MCF 10A (cell line): ENCODE measurements at regions of chr1 and their contacts with region 1.

Region 1: GRCh38 chr1:212455803-212456528 is 23.2 kb downstream of the NENF start:
- DNase-seq: peak; percentile 88
- H3K4me3 Mint-ChIP-seq: no peak overlapping the region
- H3K27ac Mint-ChIP-seq: no peak overlapping the region
- H3K4me1 Mint-ChIP-seq: no peaks in the 10 kb centered on the region
- H3K27me3 Mint-ChIP-seq: no peaks in the 10 kb centered on the region
- CTCF ChIP-seq: peak; percentile 100

Region 2: GRCh38 chr1:211698161-211699026 is 757.6 kb before region 1 on chr1:
- CTCF ChIA-PET with region 1: interaction called, 22 read pairs
- POLR2A ChIA-PET with region 1: no interaction called
- intact Hi-C with region 1: loop called (anchors 5 kb)
- DNase-seq: peak; percentile 93
- H3K4me3 Mint-ChIP-seq: no peak overlapping the region
- H3K27ac Mint-ChIP-seq: no peak overlapping the region
- H3K4me1 Mint-ChIP-seq: no peaks in the 10 kb centered on the region
- H3K27me3 Mint-ChIP-seq: no peaks in the 10 kb centered on the region
- CTCF ChIP-seq: peak; percentile 100

Region 3: DNA sequence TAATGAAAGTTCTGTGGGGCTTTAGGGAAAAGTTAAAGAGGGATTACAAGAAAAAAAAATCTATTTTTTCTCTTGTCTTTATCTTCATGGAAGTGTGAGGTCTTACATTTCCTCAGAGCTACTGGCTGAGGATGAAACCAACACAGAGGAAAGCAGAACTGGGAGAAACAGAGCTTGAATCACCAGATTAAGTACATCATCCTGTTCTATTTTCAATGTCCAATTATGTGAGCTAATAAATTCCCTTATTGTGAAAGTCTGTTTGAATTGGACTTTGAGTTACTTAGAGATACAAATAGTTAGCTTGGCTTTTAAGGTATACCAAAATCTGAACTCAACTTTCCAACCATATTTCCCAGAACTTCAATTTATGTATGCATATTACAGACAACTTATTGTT is 694.6 kb before region 1 on chr1:
- CTCF ChIA-PET with region 1: no interaction called
- POLR2A ChIA-PET with region 1: no interaction called
- intact Hi-C with region 1: no loop called
- DNase-seq: no peak
- H3K4me3 Mint-ChIP-seq: no peak overlapping the region
- H3K27ac Mint-ChIP-seq: no peak overlapping the region
- H3K4me1 Mint-ChIP-seq: no peaks in the 10 kb centered on the region
- H3K27me3 Mint-ChIP-seq: no peaks in the 10 kb centered on the region
- CTCF ChIP-seq: no peak

Region 4: DNA sequence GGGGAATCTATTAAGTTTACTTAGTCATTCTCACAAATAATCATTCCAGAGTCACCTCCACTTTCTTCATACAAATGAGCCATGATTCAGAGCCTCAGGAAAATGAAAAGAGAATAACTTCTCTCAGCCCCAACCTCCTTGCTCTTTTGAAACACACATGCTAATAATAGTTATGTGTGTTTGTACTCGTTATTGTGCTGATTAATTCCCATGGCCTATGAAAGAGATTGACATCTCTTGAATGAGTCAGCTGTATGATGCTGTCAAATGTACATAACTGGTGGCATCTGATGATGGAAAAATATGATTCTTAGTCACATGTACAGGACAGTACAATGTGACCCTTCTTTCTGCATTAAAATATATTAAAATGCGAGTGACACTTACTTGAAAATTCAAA is 378.9 kb before region 1 on chr1:
- CTCF ChIA-PET with region 1: interaction called, 481 read pairs
- POLR2A ChIA-PET with region 1: no interaction called
- intact Hi-C with region 1: no loop called
- DNase-seq: peak; percentile 51
- H3K4me3 Mint-ChIP-seq: no peak overlapping the region
- H3K27ac Mint-ChIP-seq: peak overlapping the region; percentile 41
- H3K4me1 Mint-ChIP-seq: peaks cover 13% of the 10 kb centered on the region
- H3K27me3 Mint-ChIP-seq: no peaks in the 10 kb centered on the region
- CTCF ChIP-seq: no peak

Region 5: DNA sequence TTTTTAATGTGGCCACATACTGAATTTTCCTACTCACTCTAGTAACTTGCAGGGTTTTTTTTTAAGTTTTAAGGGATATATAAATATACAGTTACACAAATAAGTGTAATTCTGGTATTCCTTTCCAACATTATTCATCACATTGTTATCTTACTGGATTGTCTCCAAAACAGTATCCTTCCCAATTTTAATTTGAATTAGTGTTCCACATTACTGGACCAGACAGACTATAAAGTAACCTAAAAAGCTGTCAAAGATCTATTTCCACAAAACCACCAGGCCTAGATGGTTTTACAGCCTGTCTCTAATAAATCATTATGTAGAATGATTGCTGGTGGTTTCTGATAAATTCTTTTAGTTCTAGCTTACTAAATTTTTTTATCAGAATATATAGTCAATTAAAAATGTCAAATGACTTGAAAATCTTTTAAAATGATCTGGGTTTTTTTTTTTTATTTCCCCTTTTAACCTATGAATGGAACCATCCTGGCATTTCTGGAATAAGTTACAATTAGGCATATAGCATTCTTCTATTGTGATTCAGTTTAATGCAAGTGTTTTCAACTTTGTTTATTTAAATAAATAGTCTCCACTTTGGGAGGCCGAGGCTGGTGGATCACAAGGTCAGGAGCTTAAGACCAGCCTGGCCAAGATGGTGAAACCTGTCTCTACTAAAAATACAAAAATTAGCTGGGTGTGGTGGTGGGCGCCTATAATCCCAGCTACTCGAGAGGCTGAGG is 100.6 kb before region 1 on chr1:
- CTCF ChIA-PET with region 1: interaction called, 222 read pairs
- POLR2A ChIA-PET with region 1: no interaction called
- intact Hi-C with region 1: no loop called
- DNase-seq: no peak
- H3K4me3 Mint-ChIP-seq: no peak overlapping the region
- H3K27ac Mint-ChIP-seq: no peak overlapping the region
- H3K4me1 Mint-ChIP-seq: peaks cover 6% of the 10 kb centered on the region
- H3K27me3 Mint-ChIP-seq: no peaks in the 10 kb centered on the region
- CTCF ChIP-seq: no peak

Region 6: DNA sequence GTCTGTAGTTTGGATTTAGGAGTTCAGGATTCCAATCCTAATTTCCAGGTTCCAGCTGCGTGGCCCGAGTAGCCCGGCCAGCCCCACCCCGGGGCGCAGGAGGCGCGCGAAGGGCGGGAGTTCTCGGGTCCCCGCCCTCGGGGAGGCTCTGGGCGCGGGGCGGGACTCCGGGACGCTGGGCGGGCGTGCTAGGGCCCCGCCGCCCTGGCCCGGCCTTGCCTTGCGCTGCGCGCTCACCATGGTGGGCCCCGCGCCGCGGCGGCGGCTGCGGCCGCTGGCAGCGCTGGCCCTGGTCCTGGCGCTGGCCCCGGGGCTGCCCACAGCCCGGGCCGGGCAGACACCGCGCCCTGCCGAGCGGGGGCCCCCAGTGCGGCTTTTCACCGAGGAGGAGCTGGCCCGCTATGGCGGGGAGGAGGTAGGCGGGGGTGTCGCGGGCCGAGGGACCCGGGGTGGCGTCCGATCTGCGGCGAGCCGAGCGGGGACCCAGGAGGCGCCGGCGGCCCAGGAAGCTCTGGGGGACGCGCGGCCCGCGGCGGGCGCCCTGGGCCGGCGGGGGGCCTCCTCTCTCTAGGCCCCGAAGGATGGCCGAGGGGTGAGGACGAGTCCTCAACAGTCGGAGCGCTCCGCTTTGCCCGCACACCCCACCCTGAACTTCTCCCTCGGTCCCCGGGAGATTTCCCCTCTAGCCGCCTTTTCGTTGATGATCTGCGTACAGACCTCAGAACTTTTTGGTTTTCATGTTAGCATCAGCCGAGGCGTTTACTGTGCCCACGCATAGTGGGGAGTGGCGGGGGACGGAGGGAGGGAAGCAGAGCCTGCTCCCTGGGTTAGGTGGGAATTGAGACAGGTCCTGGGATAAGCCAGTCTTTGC is 23.0 kb before region 1 on chr1 and contains the start of gene NENF:
- CTCF ChIA-PET with region 1: interaction called, 160 read pairs
- POLR2A ChIA-PET with region 1: interaction called, 3 read pairs
- intact Hi-C with region 1: no loop called
- DNase-seq: peak; percentile 96
- H3K4me3 Mint-ChIP-seq: peak within 1 kb of the TSS; percentile 78
- H3K27ac Mint-ChIP-seq: peak within 1 kb of the TSS; percentile 81
- H3K4me1 Mint-ChIP-seq: peaks cover 43% of the 10 kb centered on the region
- H3K27me3 Mint-ChIP-seq: no peaks in the 10 kb centered on the region
- CTCF ChIP-seq: no peak
- total RNA-seq, gene NENF: 110 and 122 TPM in 2 replicates

Region 7: GRCh38 chr1:212743901-212744475 is 288.0 kb after region 1 on chr1:
- CTCF ChIA-PET with region 1: interaction called, 30 read pairs
- POLR2A ChIA-PET with region 1: interaction called, 3 read pairs
- intact Hi-C with region 1: no loop called
- DNase-seq: no peak
- H3K4me3 Mint-ChIP-seq: no peak overlapping the region
- H3K27ac Mint-ChIP-seq: no peak overlapping the region
- H3K4me1 Mint-ChIP-seq: no peaks in the 10 kb centered on the region
- H3K27me3 Mint-ChIP-seq: no peaks in the 10 kb centered on the region
- CTCF ChIP-seq: no peak

Region 8: GRCh38 chr1:212994926-212995325 is 539.0 kb after region 1 on chr1:
- CTCF ChIA-PET with region 1: interaction called, 32 read pairs
- POLR2A ChIA-PET with region 1: interaction called, 3 read pairs
- intact Hi-C with region 1: loop called (anchors 1 kb)
- DNase-seq: no peak
- H3K4me3 Mint-ChIP-seq: no peak overlapping the region
- H3K27ac Mint-ChIP-seq: no peak overlapping the region
- H3K4me1 Mint-ChIP-seq: no peaks in the 10 kb centered on the region
- H3K27me3 Mint-ChIP-seq: no peaks in the 10 kb centered on the region
- CTCF ChIP-seq: no peak